ENCODE measurements at regions of chr5 and their contacts with region 1.

Region 1: GRCh38 chr5:138503487-138504270 is 38.4 kb downstream of the EGR1 start:
- DNase-seq: peak; percentile 38
- H3K4me3 ChIP-seq: no peak overlapping the region
- H3K27ac ChIP-seq: no peak overlapping the region
- H3K4me1 ChIP-seq: no peaks in the 10 kb centered on the region
- H3K27me3 ChIP-seq: no peaks in the 10 kb centered on the region
- CTCF ChIP-seq: peak; percentile 71 to 77 (median 73)
- POLR2A ChIP-seq: no peak

Region 2: GRCh38 chr5:138449501-138450239 is 54.0 kb before region 1 on chr5:
- intact Hi-C with region 1: loop called (anchors 10 kb)
- DNase-seq: peak; percentile 95
- H3K4me3 ChIP-seq: peak overlapping the region; percentile 1 to 31
- H3K27ac ChIP-seq: no peak overlapping the region
- H3K4me1 ChIP-seq: peaks cover 4% of the 10 kb centered on the region
- H3K27me3 ChIP-seq: no peaks in the 10 kb centered on the region
- CTCF ChIP-seq: peak; percentile 94 to 95 (median 94)
- POLR2A ChIP-seq: no peak

Measured in testis (tissue), 5 donors.